Heart left ventricle (tissue), 16 donors: ENCODE measurements at regions of chr1 and their contacts with region 1.

Region 1: DNA sequence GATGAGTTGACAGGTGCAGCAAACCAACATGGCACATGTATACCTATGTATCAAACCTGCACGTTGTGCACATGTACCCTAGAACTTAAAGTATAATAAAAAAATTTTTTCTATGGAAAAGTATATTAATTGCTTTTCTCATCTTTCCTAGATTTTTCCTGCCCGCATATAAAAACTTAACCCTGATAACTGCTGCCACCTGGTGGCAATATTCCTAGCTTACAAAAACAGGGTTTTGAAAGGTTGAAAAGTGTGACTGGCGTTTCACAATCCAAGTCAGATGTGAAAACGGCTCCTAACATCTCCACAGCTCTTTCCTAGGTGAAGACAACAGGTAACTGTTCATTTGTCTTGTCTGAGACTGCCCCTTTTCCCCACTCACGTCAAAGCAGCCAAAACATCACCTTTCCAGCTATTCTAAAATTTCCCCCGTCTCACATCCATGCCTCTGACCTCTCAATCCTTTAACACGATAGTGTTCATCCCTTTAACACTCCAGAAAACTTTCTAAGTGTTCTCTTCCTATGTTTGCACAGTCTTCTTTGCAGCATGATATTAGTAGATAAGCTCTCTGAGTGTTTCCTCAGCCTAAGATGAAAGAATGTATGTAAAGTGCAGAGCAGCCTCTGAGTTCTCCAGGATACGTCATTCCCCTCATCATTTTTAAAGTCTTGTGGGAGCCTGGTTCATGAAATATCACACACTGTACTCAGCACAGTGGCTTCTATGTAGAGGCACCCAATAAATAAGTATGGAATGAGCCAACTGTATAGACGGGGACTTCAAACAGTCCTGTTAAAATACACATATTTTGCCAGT is 27.5 kb downstream of the OVGP1 start:
- DNase-seq: peak in 3 of 5 donors; percentile 26 to 32 (median 29)
- ATAC-seq: no peak
- H3K4me3 ChIP-seq: no peak overlapping the region
- H3K27ac ChIP-seq: no peak overlapping the region
- H3K4me1 ChIP-seq: no peaks in the 10 kb centered on the region
- H3K27me3 ChIP-seq: peaks cover 0 to 3% (median 0%) of the 10 kb centered on the region in 9 donors
- CTCF ChIP-seq: peak; percentile 53 to 82 (median 69)
- POLR2A ChIP-seq: no peak

Region 2: GRCh38 chr1:110787328-110788071 is 612.5 kb before region 1 on chr1:
- intact Hi-C with region 1: no loop called
- DNase-seq: no peak
- ATAC-seq: no peak
- H3K4me3 ChIP-seq: no peak overlapping the region
- H3K27ac ChIP-seq: peak overlapping the region in 1 of 12 donors; percentile 82
- H3K4me1 ChIP-seq: peaks cover 0 to 19% (median 0%) of the 10 kb centered on the region in 12 donors
- H3K27me3 ChIP-seq: peaks cover 0 to 20% (median 0%) of the 10 kb centered on the region in 9 donors
- CTCF ChIP-seq: no peak
- POLR2A ChIP-seq: no peak

Region 3: GRCh38 chr1:111030590-111030989 is 369.4 kb before region 1 on chr1:
- intact Hi-C with region 1: loop called in 1 of 10 experiments (anchors 5 kb)
- DNase-seq: peak in 1 of 5 donors; percentile 13
- ATAC-seq: no peak
- H3K4me3 ChIP-seq: no peak overlapping the region
- H3K27ac ChIP-seq: no peak overlapping the region
- H3K4me1 ChIP-seq: no peaks in the 10 kb centered on the region
- H3K27me3 ChIP-seq: no peaks in the 10 kb centered on the region
- CTCF ChIP-seq: peak; percentile 43 to 80 (median 60)
- POLR2A ChIP-seq: no peak

Region 4: GRCh38 chr1:111227851-111228747 is 171.9 kb before region 1 on chr1:
- intact Hi-C with region 1: loop called (anchors 1 to 5 kb)
- DNase-seq: peak in 4 of 5 donors; percentile 26 to 54 (median 38)
- ATAC-seq: peak; percentile 82 to 98 (median 95)
- H3K4me3 ChIP-seq: no peak overlapping the region
- H3K27ac ChIP-seq: peak overlapping the region in 9 of 12 donors; percentile 6 to 75 (median 50)
- H3K4me1 ChIP-seq: peaks cover 0 to 37% (median 2%) of the 10 kb centered on the region in 12 donors
- H3K27me3 ChIP-seq: no peaks in the 10 kb centered on the region
- CTCF ChIP-seq: no peak
- POLR2A ChIP-seq: no peak